AG04449 (cell line): ENCODE measurements at regions of chr12 and their contacts with region 1.

Region 1: GRCh38 chr12:89461649-89462612 is 62.7 kb downstream of the GALNT4 start:
- DNase-seq: no peak
- H3K4me3 ChIP-seq: no peak overlapping the region
- CTCF ChIP-seq: peak; percentile 12

Region 2: DNA sequence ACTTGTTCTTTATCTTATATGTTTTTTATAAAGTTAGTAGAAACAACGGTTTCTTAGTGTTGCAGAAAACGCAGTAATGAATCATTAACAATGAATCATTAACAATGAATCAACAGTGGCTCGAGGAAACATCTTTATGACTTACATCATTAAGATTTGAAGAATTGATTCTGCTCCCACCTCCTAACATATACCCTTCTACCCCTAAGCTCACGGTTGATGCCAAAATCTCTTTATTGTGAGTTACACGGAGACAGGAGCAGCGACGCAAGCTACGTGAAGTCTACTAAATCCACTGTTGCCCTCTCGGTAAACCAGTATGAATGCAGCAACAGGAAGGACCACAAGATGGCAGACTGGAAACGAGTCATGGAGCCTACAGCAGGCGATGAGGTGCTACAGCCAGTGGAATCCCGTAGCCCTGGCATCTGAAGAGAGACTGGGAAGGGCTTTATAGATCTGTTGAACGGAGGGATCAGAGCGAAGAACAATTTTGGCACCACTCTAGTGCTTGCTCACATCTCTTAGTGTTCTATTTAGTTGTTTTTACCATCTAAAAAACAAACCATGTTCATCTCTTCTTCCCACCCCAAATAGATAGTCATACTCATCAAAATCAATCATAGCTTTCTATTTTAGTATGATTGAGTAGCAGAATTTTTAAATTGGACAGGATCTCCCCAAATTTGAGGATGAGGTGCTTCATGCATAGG is 442.4 kb before region 1 on chr12:
- CTCF ChIA-PET with region 1: interaction called, 195 read pairs
- POLR2A ChIA-PET with region 1: no interaction called
- DNase-seq: peak; percentile 34
- H3K4me3 ChIP-seq: peak overlapping the region; percentile 52
- CTCF ChIP-seq: peak; percentile 91

Region 3: DNA sequence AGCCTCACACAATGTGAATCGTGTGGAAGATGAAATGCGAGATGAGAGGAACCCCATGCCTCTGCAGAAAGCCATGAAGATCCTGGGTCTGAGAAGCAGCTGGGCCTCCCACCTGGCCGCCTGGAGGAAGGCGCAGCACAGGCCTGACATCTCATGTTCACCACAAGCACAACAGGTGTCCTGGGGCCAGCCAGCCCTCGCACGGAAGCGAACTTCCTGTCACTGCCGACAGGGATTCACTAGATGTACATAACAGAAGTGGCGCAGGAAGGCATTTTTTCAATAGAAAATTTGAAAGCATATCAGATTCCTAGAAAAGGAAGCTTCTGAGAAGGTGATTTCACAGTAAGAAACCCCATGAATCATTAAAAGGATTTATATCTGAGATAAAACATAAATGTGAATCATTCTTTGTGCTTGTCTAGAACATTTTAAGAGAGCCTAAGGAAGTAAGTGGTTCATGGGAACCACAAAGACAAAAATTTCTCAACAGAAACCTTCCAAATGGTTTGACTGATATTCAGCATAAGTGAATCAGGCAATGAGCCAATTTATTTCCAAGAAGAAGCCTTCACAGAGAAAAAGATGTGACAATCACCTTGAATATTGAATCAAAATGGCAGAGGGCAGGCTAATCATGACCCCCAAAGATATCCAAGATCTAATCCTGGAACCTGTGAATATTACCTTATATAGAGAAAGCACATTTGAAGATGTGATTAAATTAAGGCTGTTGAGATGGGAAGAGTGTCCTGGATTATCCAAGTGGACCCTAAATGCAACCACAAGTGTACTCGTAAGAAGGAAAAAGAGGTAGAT is 421.6 kb before region 1 on chr12:
- CTCF ChIA-PET with region 1: interaction called, 21 read pairs
- POLR2A ChIA-PET with region 1: no interaction called
- DNase-seq: peak; percentile 36
- H3K4me3 ChIP-seq: no peak overlapping the region
- CTCF ChIP-seq: no peak

Region 4: DNA sequence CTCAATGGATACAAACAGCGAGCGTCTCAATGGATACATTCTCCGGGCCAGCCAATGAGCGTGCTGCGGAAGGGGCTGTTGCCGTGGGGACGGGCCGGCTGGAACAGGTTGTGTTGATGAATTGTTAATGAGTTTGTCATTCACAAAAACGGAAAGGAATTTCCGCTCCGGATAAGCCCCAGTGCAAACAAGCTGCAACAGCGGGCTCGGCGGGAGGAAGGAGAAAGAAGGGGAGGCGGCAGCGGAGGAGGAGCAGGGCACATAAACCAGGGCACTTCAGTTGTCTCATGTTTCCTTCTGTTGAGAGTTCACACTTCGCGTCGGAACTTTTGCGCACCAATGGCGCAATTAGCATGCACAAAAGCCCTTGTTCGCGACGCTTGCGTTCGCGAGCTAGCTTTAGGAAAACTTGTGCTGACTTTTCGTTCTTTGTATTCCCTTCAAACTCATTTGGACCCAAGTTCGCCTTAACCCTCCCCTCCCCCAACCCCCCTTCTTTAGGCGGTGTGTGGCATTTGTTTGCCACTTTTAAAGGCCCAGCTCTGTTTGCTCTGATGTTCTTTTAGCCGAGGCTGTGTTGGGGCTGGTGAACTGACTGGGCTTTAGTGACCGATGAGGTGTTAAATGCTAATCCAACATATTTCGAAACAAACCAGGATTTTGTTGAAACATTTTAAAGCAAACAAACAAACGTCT is 109.3 kb before region 1 on chr12 and contains the start of gene DUSP6:
- CTCF ChIA-PET with region 1: interaction called, 56 read pairs
- POLR2A ChIA-PET with region 1: interaction called, 10 read pairs
- DNase-seq: peak; percentile 96
- H3K4me3 ChIP-seq: peak within 1 kb of the TSS; percentile 88
- CTCF ChIP-seq: no peak

Region 5: GRCh38 chr12:89451841-89452251 is 10.1 kb before region 1 on chr12:
- CTCF ChIA-PET with region 1: interaction called, 14 read pairs
- POLR2A ChIA-PET with region 1: no interaction called
- DNase-seq: peak; percentile 62
- H3K4me3 ChIP-seq: no peak overlapping the region
- CTCF ChIP-seq: no peak